CD8-positive, alpha-beta memory T cell (primary cell): ENCODE measurements at regions of chr1 and their contacts with region 1.

Region 1: DNA sequence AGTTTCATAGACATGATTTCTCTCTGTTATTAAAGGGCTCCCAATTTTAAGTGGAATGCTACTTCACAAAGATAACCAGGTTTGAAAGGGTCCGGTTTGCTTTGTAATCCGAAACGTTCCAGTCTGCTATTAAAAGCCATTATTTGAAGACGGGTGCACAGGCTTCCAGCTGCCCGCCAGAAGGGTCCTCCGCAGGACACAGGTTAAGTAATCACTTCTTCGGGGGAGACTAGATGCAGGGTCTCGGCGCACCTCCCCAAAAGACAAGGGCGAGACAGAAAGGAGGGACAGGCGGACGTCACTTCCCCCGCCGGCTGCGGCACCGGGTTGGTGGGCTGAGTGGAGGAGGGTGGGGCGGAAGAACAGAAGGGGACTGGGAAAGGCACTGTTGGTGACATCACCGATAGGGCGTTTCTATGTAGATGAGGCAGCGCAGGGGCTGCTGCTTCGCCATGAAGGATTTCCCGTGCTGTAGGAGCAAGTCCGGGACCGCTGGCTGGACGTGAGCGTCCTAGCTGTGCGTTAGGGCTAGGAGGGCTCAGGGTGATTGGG is 8.9 kb downstream of the RNU1-2 start:
- DNase-seq: peak; percentile 93 to 100 (median 99)
- H3K4me3 ChIP-seq: peak overlapping the region; percentile 64
- H3K4me3 Mint-ChIP-seq: no peak overlapping the region
- H3K27ac ChIP-seq: peak overlapping the region; percentile 99
- H3K27ac Mint-ChIP-seq: no peak overlapping the region
- H3K4me1 ChIP-seq: peaks cover 36% of the 10 kb centered on the region
- H3K4me1 Mint-ChIP-seq: peaks cover 21 to 33% (median 28%) of the 10 kb centered on the region in 3 donors
- H3K27me3 ChIP-seq: no peaks in the 10 kb centered on the region
- H3K27me3 Mint-ChIP-seq: peaks cover 0 to 4% of the 10 kb centered on the region in 2 donors

Region 2: GRCh38 chr1:16888860-16889816 is 15.5 kb before region 1 on chr1:
- CTCF ChIA-PET with region 1: interaction called, 3 read pairs
- POLR2A ChIA-PET with region 1: interaction called, 10 read pairs
- DNase-seq: peak in 4 of 5 donors; percentile 30 to 63 (median 52)
- H3K4me3 ChIP-seq: peak overlapping the region; percentile 81
- H3K4me3 Mint-ChIP-seq: peak overlapping the region; percentile 91 to 95 (median 93)
- H3K27ac ChIP-seq: peak overlapping the region; percentile 61
- H3K27ac Mint-ChIP-seq: peak overlapping the region; percentile 77 to 96 (median 94)
- H3K4me1 ChIP-seq: peaks cover 11% of the 10 kb centered on the region
- H3K4me1 Mint-ChIP-seq: peaks cover 18 to 29% (median 24%) of the 10 kb centered on the region in 3 donors
- H3K27me3 ChIP-seq: no peaks in the 10 kb centered on the region
- H3K27me3 Mint-ChIP-seq: peaks cover under 1 to 5% of the 10 kb centered on the region in 2 donors

Region 3: GRCh38 chr1:16944038-16944437 is 39.4 kb after region 1 on chr1:
- CTCF ChIA-PET with region 1: no interaction called
- POLR2A ChIA-PET with region 1: no interaction called
- DNase-seq: no peak
- H3K4me3 ChIP-seq: no peak overlapping the region
- H3K4me3 Mint-ChIP-seq: no peak overlapping the region
- H3K27ac ChIP-seq: no peak overlapping the region
- H3K27ac Mint-ChIP-seq: no peak overlapping the region
- H3K4me1 ChIP-seq: no peaks in the 10 kb centered on the region
- H3K4me1 Mint-ChIP-seq: no peaks in the 10 kb centered on the region
- H3K27me3 ChIP-seq: no peaks in the 10 kb centered on the region
- H3K27me3 Mint-ChIP-seq: no peaks in the 10 kb centered on the region

Region 4: GRCh38 chr1:16971341-16972188 is 66.9 kb after region 1 on chr1:
- CTCF ChIA-PET with region 1: no interaction called
- POLR2A ChIA-PET with region 1: no interaction called
- DNase-seq: no peak
- H3K4me3 ChIP-seq: no peak overlapping the region
- H3K4me3 Mint-ChIP-seq: no peak overlapping the region
- H3K27ac ChIP-seq: no peak overlapping the region
- H3K27ac Mint-ChIP-seq: peak overlapping the region in 1 of 8 donors; percentile 36
- H3K4me1 ChIP-seq: no peaks in the 10 kb centered on the region
- H3K4me1 Mint-ChIP-seq: no peaks in the 10 kb centered on the region
- H3K27me3 ChIP-seq: no peaks in the 10 kb centered on the region
- H3K27me3 Mint-ChIP-seq: no peaks in the 10 kb centered on the region

Region 5: GRCh38 chr1:17236779-17237560 is 332.3 kb after region 1 on chr1:
- CTCF ChIA-PET with region 1: no interaction called
- POLR2A ChIA-PET with region 1: no interaction called
- DNase-seq: peak; percentile 57 to 87 (median 79)
- H3K4me3 ChIP-seq: no peak overlapping the region
- H3K4me3 Mint-ChIP-seq: no peak overlapping the region
- H3K27ac ChIP-seq: no peak overlapping the region
- H3K27ac Mint-ChIP-seq: peak overlapping the region in 2 of 8 donors; percentile 19 to 43
- H3K4me1 ChIP-seq: no peaks in the 10 kb centered on the region
- H3K4me1 Mint-ChIP-seq: no peaks in the 10 kb centered on the region
- H3K27me3 ChIP-seq: no peaks in the 10 kb centered on the region
- H3K27me3 Mint-ChIP-seq: peaks cover 3 to 4% of the 10 kb centered on the region in 2 donors